ENCODE measurements at regions of chr11 and their contacts with region 1.

Region 1: DNA sequence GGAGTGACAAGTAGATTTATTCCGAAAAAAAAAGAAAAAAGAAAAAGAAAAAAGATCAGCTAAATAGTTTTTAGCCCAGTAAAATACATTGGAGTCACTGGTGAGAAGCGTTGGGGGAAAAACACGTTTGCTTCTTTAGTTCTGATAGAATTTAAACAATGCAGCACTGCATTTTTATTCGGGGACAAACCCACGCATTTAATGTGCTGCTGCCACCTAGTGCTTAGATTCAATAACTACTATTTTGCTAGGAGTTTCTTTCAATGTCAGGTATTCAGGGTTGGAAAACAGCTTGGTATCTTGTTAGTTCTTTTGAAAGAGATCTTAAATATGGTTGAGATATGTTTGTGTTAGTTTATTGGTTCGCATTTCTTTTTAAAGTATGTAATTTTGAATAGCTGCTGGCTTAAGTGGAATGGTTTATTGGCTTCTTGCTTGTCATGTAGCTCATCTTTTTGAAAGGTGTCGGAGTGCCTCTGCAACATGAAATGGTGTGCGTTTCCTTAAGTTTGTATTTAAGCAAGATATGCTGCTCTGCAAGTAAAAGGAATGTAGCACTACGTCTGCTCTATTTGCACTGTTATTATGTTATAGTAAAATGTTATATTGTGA is 41.9 kb downstream of the SVIP start:
- DNase-seq: peak in 2 of 10 donors; percentile 11 to 38

Region 2: GRCh38 chr11:22337596-22338485 is 449.8 kb before region 1 on chr11 and contains the start of gene SLC17A6:
- intact Hi-C with region 1: loop called (anchors 2 kb)
- DNase-seq: peak in 1 of 10 donors; percentile 72

Region 3: DNA sequence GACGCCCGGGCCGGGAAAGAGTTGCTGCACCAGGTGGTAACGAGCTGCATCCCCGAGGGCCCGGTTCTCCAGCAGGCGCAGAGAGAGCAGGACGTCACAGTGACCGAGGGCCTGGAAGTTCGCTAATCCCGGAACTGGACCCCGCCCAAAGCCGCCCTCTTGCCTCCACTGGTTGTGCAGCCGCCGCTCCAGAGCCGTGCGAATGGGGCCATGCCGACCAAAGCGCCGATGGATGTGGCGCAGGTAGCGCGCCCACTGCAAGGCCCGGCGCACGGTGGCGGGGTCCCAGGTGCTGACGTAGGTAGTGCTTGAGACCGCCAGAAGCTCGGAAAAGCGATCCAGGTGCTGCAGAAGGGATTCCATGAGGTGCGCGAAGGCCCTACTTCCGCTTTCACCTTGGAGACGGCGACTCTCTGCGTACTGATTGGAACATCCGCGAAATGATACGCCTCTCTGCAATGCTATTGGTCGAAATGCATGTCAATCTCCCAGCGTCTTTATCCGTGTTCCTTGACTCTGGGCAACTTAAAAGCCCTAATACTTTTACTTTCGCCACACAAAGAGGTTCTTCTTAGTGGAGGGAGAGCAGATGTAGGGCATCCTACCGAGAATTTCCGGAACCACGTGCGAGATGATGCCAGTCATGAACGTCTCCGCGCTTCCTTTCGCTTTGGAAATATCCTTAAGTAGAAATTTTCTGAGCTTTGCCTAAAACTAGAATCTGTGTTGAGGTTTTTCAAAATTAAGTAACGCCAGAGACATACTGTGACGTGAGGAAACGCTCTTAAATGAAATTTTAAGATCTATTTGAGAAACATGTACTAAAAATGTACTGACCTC is 162.0 kb before region 1 on chr11 and contains the start of gene FANCF:
- intact Hi-C with region 1: loop called (anchors 5 kb)
- DNase-seq: peak; percentile 79 to 97 (median 90)

Region 4: GRCh38 chr11:22666688-22667439 is 120.8 kb before region 1 on chr11:
- intact Hi-C with region 1: loop called (anchors 5 kb)
- DNase-seq: peak; percentile 38 to 95 (median 64)

Region 5: GRCh38 chr11:22903782-22904181 is 116.1 kb after region 1 on chr11:
- intact Hi-C with region 1: no loop called
- DNase-seq: no peak

Measured in posterior cingulate gyrus (tissue), 11 donors.